ENCODE measurements at regions of chrX and their contacts with region 1.

Region 1: DNA sequence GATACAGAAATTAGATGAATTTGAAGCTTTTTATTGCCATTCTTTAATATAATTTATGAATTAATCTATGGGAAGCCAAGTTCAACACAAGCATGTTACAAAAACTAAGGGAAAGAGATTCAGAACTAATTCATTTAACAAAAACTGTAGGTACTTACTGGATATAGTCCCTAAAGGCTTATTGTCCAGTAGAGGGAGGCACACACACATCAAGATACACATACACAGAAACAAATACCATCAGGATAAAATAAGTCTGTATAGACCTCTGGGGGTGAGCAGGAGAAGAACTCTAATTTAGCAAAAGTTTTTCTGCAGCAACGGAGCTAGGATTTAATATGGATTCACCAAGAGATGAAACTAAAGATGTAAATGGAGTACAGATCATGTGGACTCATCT is 83.0 kb upstream of the IL13RA1 start:
- DNase-seq: peak; percentile 29

Region 2: DNA sequence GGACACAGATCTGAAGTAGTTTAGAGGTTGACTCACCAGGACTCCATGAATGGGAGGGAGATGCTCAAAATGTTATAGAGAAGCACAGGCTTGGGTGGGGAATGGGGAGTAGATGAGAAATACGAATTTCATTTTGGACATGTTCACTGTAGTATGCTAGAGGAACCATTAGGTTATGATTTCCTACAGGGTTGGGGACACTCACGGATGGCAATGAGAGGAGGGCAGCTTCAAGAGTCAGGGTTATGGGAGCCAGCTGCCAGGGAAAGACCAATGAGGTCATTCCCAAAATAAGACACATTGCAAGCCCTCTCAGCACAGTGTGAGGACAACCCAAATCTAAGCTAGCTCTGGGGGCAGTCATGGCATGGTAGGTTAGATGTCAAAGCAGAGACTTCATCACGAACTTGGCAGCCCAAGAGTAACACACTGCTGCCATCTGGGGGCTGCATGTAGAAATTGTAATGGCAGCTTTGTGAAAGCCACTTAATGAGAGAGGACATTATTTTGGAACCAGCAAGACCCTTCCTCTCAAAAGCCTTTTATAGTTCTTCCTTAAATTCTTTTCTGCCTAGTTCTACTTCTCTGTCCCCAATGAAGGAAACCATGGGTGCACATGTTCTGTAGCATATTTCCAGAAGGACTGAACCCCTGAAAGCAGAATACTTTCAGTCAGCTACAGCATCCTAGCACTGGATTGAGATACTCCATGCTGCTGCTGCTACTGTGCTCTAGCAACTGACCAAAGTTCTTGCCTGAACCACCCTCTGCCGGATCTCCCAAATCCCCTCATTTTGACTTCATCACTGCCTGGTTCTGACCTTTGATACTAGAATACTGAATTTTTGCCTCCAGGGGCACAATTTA is 163.0 kb after region 1 on chrX:
- in situ Hi-C with region 1: loop called (anchors 25 kb)
- DNase-seq: peak; percentile 21